ENCODE measurements at regions of chr12 and their contacts with region 1.

Region 1: DNA sequence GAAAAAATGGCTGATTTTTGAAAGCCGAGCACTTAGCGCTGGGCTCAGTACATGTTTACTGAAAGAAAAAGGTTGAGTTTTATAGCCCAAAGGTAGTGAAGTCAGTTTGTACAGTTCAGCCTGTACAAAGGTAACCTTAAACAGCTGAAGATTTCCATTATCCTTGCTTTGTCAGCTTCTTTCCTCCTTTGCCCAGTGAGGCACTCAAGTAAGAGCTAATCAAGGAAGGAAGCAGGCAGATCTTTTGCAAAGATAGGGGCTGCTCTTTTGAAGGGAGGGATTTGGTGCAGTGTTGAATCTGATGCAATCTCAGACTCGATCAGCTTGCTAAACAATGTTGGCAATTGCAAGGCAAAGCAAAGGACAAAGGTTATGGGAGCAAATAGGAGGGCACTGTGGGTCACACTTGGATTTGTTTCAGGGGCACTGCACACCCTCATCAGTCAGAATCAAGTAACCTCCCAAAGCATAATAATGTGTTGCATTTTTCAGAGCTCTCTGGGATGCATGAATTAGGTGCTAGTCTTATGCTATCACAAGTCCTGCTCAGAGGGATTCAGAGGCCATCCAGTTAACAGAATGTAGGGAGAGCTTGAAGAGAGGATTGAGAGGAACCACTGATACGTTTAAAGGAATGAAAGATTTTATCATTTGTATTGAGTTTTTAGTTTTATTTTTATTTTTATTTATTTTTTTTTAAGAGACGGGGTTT is 44.4 kb downstream of the ANO6 start:
- DNase-seq: peak; percentile 91
- ATAC-seq: peak; percentile 94
- H3K4me3 ChIP-seq: peak overlapping the region; percentile 26 to 50 (median 40); a peak in 3 of 6 replicates
- H3K27ac ChIP-seq: peak overlapping the region; percentile 82
- H3K4me1 ChIP-seq: peaks cover 66% of the 10 kb centered on the region
- H3K27me3 ChIP-seq: no peaks in the 10 kb centered on the region
- CTCF ChIP-seq: peak; percentile 26; the same call in 1 of the 2 replicates
- EP300 ChIP-seq: peak in 1 of 2 experiments; percentile 88; a peak in 2 of 4 replicates
- POLR2A ChIP-seq: no peak
- RAD21 ChIP-seq: no peak

Region 2: DNA sequence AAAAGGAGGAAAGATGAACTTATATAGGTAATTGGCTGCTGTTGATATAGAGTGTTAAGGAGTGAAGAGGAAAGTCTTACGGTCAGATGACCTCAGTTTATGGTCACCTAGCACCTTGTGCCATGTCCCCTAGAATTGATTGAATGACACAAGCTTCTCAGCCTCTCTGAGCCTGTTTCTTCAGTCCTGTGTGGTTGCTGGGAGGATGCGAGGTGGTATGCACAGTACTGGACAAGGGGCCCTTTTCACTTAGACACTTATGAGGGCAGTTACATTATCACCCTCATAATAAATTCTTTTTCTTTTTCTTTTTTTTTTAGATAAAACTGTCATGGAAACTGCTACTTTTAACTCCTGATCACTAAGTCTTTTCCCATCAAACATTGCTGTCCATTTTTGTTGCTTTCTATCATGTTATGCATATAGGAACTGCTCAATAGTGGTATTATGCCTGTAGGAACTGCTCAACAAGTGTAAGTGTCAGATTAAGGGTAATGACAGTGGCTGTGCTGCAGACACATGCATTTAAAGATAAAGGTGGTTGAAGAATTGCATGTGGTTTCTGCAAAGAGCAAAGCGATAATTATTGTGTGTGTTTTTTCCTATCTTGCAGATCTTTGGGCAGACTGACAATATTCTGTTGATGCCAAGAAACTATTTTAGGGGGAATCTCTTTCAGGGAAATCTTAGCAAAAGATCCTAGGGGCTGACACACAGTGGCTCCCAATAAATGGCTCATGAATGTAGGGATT is 32.8 kb before region 1 on chr12:
- CTCF ChIA-PET with region 1: no interaction called
- POLR2A ChIA-PET with region 1: no interaction called
- in situ Hi-C with region 1: loop called (anchors 5 kb)
- intact Hi-C with region 1: no loop called
- DNase-seq: no peak
- ATAC-seq: no peak
- H3K4me3 ChIP-seq: no peak overlapping the region
- H3K27ac ChIP-seq: no peak overlapping the region
- H3K4me1 ChIP-seq: peaks cover 22% of the 10 kb centered on the region
- H3K27me3 ChIP-seq: no peaks in the 10 kb centered on the region
- CTCF ChIP-seq: no peak
- EP300 ChIP-seq: no peak
- POLR2A ChIP-seq: no peak
- RAD21 ChIP-seq: no peak

Region 3: DNA sequence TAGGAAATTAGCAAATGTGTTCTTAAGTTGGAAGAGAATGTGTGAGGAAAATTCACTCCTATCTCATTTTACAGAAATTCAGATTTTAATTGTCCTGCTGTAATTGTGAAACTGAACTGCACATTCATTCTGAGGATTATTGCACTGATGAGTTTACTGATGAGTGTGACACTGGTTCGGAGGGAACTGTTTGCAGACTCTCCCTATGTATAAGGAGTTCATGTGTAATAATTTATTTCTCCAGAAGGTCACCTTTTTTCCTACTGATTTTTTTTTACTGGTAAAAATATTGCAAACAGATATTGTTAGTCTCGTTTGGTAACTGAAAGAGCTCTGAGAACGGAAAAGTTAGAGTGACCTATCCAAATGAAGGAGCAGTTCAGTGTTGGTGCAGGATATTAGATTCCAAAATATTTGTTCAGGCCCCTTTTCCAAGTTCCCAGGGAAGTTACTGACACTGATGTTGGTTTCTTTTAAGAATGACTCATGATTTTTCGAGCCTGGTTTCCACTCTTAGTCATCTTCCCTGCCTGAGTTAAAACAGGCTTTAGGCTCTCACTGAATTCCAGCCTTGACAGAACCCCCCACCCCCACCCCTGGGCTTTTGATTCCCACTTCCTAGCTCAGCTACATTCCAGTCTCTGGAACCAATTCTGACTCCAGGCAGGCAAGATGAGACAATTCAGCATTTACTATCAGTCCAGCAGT is 26.0 kb before region 1 on chr12:
- CTCF ChIA-PET with region 1: no interaction called
- POLR2A ChIA-PET with region 1: interaction called, 11 read pairs
- in situ Hi-C with region 1: loop called (anchors 5 kb)
- intact Hi-C with region 1: loop called (anchors 1 kb)
- DNase-seq: peak; percentile 92
- ATAC-seq: peak; percentile 88
- H3K4me3 ChIP-seq: peak overlapping the region in 2 of 3 experiments; percentile 20 to 21; a peak in 2 of 6 replicates
- H3K27ac ChIP-seq: peak overlapping the region; percentile 67
- H3K4me1 ChIP-seq: peaks cover 56% of the 10 kb centered on the region
- H3K27me3 ChIP-seq: no peaks in the 10 kb centered on the region
- CTCF ChIP-seq: no peak
- EP300 ChIP-seq: peak in 1 of 2 experiments; percentile 53; a peak in 1 of 4 replicates
- POLR2A ChIP-seq: no peak
- RAD21 ChIP-seq: no peak

Measured in HepG2 (cell line).